ENCODE measurements at regions of chr20 and their contacts with region 1.

Region 1: GRCh38 chr20:31723319-31724078 is 831 bp upstream of the BCL2L1 start:
- DNase-seq: peak; percentile 99
- ATAC-seq: peak; percentile 89 to 96 (median 91)
- H3K4me3 ChIP-seq: peak overlapping the region; percentile 75
- H3K4me3 Mint-ChIP-seq: peak overlapping the region; percentile 98
- H3K27ac ChIP-seq: peak overlapping the region; percentile 88
- H3K27ac Mint-ChIP-seq: peak overlapping the region; percentile 84 to 97
- H3K4me1 ChIP-seq: peaks cover 40% of the 10 kb centered on the region
- H3K4me1 Mint-ChIP-seq: peaks cover 49 to 52% of the 10 kb centered on the region in 2 donors
- H3K27me3 ChIP-seq: no peaks in the 10 kb centered on the region
- H3K27me3 Mint-ChIP-seq: no peaks in the 10 kb centered on the region
- CTCF ChIP-seq: peak; percentile 82

Region 2: GRCh38 chr20:31514159-31515071 is 209.1 kb before region 1 on chr20 and contains the start of gene HM13:
- intact Hi-C with region 1: loop called (anchors 1 kb)
- DNase-seq: peak; percentile 85 to 97
- ATAC-seq: peak; percentile 88 to 95 (median 89)
- H3K4me3 ChIP-seq: peak within 1 kb of the TSS; percentile 85
- H3K4me3 Mint-ChIP-seq: no peak within 1 kb of the TSS
- H3K27ac ChIP-seq: peak within 1 kb of the TSS; percentile 67
- H3K27ac Mint-ChIP-seq: no peak within 1 kb of the TSS
- H3K4me1 ChIP-seq: peaks cover 35% of the 10 kb centered on the region
- H3K4me1 Mint-ChIP-seq: peaks cover 12% of the 10 kb centered on the region in 2 donors
- H3K27me3 ChIP-seq: no peaks in the 10 kb centered on the region
- H3K27me3 Mint-ChIP-seq: peaks cover 0 to under 1% of the 10 kb centered on the region in 2 donors
- CTCF ChIP-seq: peak; percentile 99
- total RNA-seq, gene HM13: 97.5 to 135 (median 104) TPM

Region 3: GRCh38 chr20:31572701-31573554 is 150.6 kb before region 1 on chr20:
- intact Hi-C with region 1: loop called (anchors 1 kb)
- DNase-seq: peak; percentile 78 to 93
- ATAC-seq: peak; percentile 90 to 97 (median 91)
- H3K4me3 ChIP-seq: peak overlapping the region; percentile 66
- H3K4me3 Mint-ChIP-seq: peak overlapping the region; percentile 93
- H3K27ac ChIP-seq: peak overlapping the region; percentile 74
- H3K27ac Mint-ChIP-seq: peak overlapping the region; percentile 88 to 92
- H3K4me1 ChIP-seq: peaks cover 13% of the 10 kb centered on the region
- H3K4me1 Mint-ChIP-seq: peaks cover 18 to 26% of the 10 kb centered on the region in 2 donors
- H3K27me3 ChIP-seq: no peaks in the 10 kb centered on the region
- H3K27me3 Mint-ChIP-seq: no peaks in the 10 kb centered on the region
- CTCF ChIP-seq: no peak

Region 4: GRCh38 chr20:31630187-31630790 is 93.2 kb before region 1 on chr20:
- intact Hi-C with region 1: loop called (anchors 1 kb)
- DNase-seq: no peak
- ATAC-seq: no peak
- H3K4me3 ChIP-seq: no peak overlapping the region
- H3K4me3 Mint-ChIP-seq: no peak overlapping the region
- H3K27ac ChIP-seq: no peak overlapping the region
- H3K27ac Mint-ChIP-seq: no peak overlapping the region
- H3K4me1 ChIP-seq: peaks cover 3% of the 10 kb centered on the region
- H3K4me1 Mint-ChIP-seq: no peaks in the 10 kb centered on the region
- H3K27me3 ChIP-seq: no peaks in the 10 kb centered on the region
- H3K27me3 Mint-ChIP-seq: no peaks in the 10 kb centered on the region
- CTCF ChIP-seq: no peak

Region 5: GRCh38 chr20:31661625-31662371 is 61.7 kb before region 1 on chr20:
- intact Hi-C with region 1: loop called (anchors 1 kb)
- DNase-seq: peak; percentile 77 to 90
- ATAC-seq: peak; percentile 79 to 91 (median 85)
- H3K4me3 ChIP-seq: peak overlapping the region; percentile 35
- H3K4me3 Mint-ChIP-seq: peak overlapping the region; percentile 93
- H3K27ac ChIP-seq: peak overlapping the region; percentile 66
- H3K27ac Mint-ChIP-seq: peak overlapping the region; percentile 89 to 100
- H3K4me1 ChIP-seq: peaks cover 51% of the 10 kb centered on the region
- H3K4me1 Mint-ChIP-seq: peaks cover 48 to 57% of the 10 kb centered on the region in 2 donors
- H3K27me3 ChIP-seq: no peaks in the 10 kb centered on the region
- H3K27me3 Mint-ChIP-seq: no peaks in the 10 kb centered on the region
- CTCF ChIP-seq: peak; percentile 64

Region 6: GRCh38 chr20:31674895-31675827 is 48.3 kb before region 1 on chr20:
- intact Hi-C with region 1: loop called (anchors 2 kb)
- DNase-seq: peak; percentile 58 to 88
- ATAC-seq: peak; percentile 80 to 87 (median 82)
- H3K4me3 ChIP-seq: peak overlapping the region; percentile 58
- H3K4me3 Mint-ChIP-seq: peak overlapping the region; percentile 95
- H3K27ac ChIP-seq: peak overlapping the region; percentile 90
- H3K27ac Mint-ChIP-seq: peak overlapping the region; percentile 89 to 100
- H3K4me1 ChIP-seq: peaks cover 96% of the 10 kb centered on the region
- H3K4me1 Mint-ChIP-seq: peaks cover 84 to 88% of the 10 kb centered on the region in 2 donors
- H3K27me3 ChIP-seq: no peaks in the 10 kb centered on the region
- H3K27me3 Mint-ChIP-seq: no peaks in the 10 kb centered on the region
- CTCF ChIP-seq: no peak

Region 7: DNA sequence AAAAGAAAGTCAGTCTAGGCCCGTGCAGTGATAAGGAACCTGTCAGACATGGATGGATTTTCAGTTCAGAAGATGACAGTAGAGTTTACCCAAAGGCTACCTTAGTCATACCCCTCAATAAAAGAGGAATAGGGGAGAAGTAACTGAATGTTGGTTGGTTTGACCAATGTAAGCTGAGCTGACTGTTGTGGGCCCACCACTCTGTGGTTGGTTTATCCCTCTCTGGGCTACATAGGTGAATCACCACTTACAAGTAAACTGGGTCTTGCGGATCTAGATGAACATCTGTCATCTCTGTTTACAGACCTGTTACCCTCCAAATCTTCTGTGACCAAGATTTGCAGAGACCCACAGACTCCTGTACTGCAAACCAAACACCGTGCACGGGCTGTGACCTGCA is 58.4 kb after region 1 on chr20:
- intact Hi-C with region 1: no loop called
- DNase-seq: no peak
- ATAC-seq: no peak
- H3K4me3 ChIP-seq: no peak overlapping the region
- H3K4me3 Mint-ChIP-seq: no peak overlapping the region
- H3K27ac ChIP-seq: no peak overlapping the region
- H3K27ac Mint-ChIP-seq: no peak overlapping the region
- H3K4me1 ChIP-seq: no peaks in the 10 kb centered on the region
- H3K4me1 Mint-ChIP-seq: no peaks in the 10 kb centered on the region
- H3K27me3 ChIP-seq: no peaks in the 10 kb centered on the region
- H3K27me3 Mint-ChIP-seq: no peaks in the 10 kb centered on the region
- CTCF ChIP-seq: no peak

Region 8: DNA sequence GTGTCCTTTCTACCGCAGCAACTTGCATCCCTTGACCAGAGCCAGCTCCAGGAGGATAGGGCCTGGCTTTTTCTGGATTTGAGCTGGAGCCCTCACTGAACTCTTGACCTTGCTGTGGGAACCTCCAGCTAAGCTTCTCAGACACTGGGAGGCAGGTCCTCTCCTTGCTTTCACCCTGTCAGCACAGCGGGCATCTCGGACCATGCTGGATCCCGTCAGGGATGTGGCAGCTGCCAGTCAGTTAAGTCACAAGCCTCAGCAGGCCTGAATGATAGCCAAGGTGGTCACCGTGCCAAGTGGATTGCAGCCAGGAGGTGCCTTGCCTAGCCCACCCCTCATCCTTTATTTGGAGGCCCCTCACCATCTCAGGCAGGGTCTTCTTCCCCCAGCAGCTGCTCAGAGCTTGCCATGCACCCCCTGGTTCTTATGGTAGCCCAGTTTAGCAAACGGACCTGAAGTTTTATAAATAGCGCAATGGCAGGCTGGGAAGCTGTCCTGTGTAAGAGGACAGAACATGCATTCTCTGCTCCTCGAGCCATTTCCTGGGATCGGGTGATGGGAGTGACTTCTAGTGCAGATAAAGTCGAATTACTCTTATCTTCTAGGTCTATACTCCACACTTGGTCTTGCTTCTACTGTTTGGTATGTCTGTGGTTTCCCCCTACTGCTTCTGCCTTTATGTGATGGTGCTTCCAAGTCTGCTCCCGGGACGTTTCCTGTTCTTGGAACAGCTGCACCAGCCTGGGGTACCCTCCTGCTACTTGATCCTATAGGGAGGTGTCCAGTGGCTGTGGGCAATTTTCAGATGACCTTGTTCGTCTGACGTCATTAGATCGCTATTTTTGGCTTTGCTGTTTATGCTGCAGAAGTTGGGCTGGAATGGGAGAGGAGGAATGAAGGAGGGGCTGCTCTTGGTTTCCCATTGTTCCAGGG is 88.6 kb after region 1 on chr20:
- intact Hi-C with region 1: no loop called
- DNase-seq: no peak
- ATAC-seq: no peak
- H3K4me3 ChIP-seq: no peak overlapping the region
- H3K4me3 Mint-ChIP-seq: no peak overlapping the region
- H3K27ac ChIP-seq: no peak overlapping the region
- H3K27ac Mint-ChIP-seq: no peak overlapping the region
- H3K4me1 ChIP-seq: no peaks in the 10 kb centered on the region
- H3K4me1 Mint-ChIP-seq: no peaks in the 10 kb centered on the region
- H3K27me3 ChIP-seq: no peaks in the 10 kb centered on the region
- H3K27me3 Mint-ChIP-seq: no peaks in the 10 kb centered on the region
- CTCF ChIP-seq: no peak

Region 9: GRCh38 chr20:32509639-32510066 is 786.2 kb after region 1 on chr20:
- intact Hi-C with region 1: no loop called
- DNase-seq: peak; percentile 37 to 88
- ATAC-seq: peak; percentile 81 to 87 (median 84)
- H3K4me3 ChIP-seq: no peak overlapping the region
- H3K4me3 Mint-ChIP-seq: peak overlapping the region; percentile 86
- H3K27ac ChIP-seq: peak overlapping the region; percentile 79
- H3K27ac Mint-ChIP-seq: peak overlapping the region; percentile 93
- H3K4me1 ChIP-seq: peaks cover 75% of the 10 kb centered on the region
- H3K4me1 Mint-ChIP-seq: peaks cover 55 to 82% of the 10 kb centered on the region in 2 donors
- H3K27me3 ChIP-seq: no peaks in the 10 kb centered on the region
- H3K27me3 Mint-ChIP-seq: no peaks in the 10 kb centered on the region
- CTCF ChIP-seq: peak; percentile 13

Measured in natural killer cell (primary cell).